PC-9 (cell line): ENCODE measurements at regions of chr7 and their contacts with region 1.

Region 1: DNA sequence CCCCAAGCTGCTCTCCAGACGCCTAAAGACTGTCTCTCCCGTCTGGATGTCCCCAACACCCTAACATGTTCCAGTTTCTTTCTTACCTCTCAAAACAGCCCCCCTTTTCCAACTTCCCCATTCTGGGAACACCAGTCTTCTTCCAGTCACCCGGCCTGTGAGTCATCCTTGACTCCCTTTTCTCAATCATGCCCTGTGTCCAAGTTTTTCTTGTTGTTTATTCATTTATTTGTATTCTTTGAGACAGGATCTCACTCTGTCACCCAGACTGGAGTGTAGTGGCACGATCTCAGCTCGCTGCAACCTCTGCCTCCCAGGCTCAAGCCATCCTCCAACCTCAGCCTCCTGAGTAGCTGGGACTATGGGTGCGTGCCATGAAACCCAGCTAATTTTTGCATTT is 15.6 kb downstream of the SNX10 start:
- DNase-seq: peak in 1 of 2 experiments; percentile 65
- H3K4me3 ChIP-seq: no peak overlapping the region
- H3K27ac ChIP-seq: peak overlapping the region; percentile 34
- H3K4me1 ChIP-seq: peaks cover 24% of the 10 kb centered on the region
- H3K27me3 ChIP-seq: no peaks in the 10 kb centered on the region
- CTCF ChIP-seq: no peak

Region 2: GRCh38 chr7:24690251-24690650 is 1617.0 kb before region 1 on chr7:
- CTCF ChIA-PET with region 1: no interaction called
- POLR2A ChIA-PET with region 1: interaction called, 10 read pairs
- intact Hi-C with region 1: no loop called
- DNase-seq: no peak
- H3K4me3 ChIP-seq: no peak overlapping the region
- H3K27ac ChIP-seq: no peak overlapping the region
- H3K4me1 ChIP-seq: no peaks in the 10 kb centered on the region
- H3K27me3 ChIP-seq: no peaks in the 10 kb centered on the region
- CTCF ChIP-seq: no peak

Region 3: GRCh38 chr7:26187380-26188205 is 119.6 kb before region 1 on chr7:
- CTCF ChIA-PET with region 1: no interaction called
- POLR2A ChIA-PET with region 1: interaction called, 15 read pairs
- intact Hi-C with region 1: no loop called
- DNase-seq: no peak
- H3K4me3 ChIP-seq: no peak overlapping the region
- H3K27ac ChIP-seq: peak overlapping the region; percentile 41
- H3K4me1 ChIP-seq: peaks cover 3% of the 10 kb centered on the region; the same call in 1 of the 2 replicates
- H3K27me3 ChIP-seq: no peaks in the 10 kb centered on the region
- CTCF ChIP-seq: no peak